HAP-1 (cell line): ENCODE measurements at regions of chr11 and their contacts with region 1.

Region 1: GRCh38 chr11:14249121-14249963 is 109.6 kb downstream of the RRAS2 start:
- DNase-seq: peak; percentile 68 to 75
- H3K4me3 ChIP-seq: no peak overlapping the region
- H3K4me1 ChIP-seq: no peaks in the 10 kb centered on the region
- H3K27me3 ChIP-seq: peaks cover 21% of the 10 kb centered on the region

Region 2: GRCh38 chr11:13210424-13210823 is 1038.9 kb before region 1 on chr11:
- in situ Hi-C with region 1: loop called (anchors 25 kb)
- DNase-seq: peak; percentile 39 to 73
- H3K4me3 ChIP-seq: no peak overlapping the region
- H3K4me1 ChIP-seq: peaks cover 7% of the 10 kb centered on the region; the same call in 1 of the 2 replicates
- H3K27me3 ChIP-seq: no peaks in the 10 kb centered on the region

Region 3: GRCh38 chr11:13767471-13767870 is 481.9 kb before region 1 on chr11:
- in situ Hi-C with region 1: loop called (anchors 5 kb)
- DNase-seq: no peak
- H3K4me3 ChIP-seq: no peak overlapping the region
- H3K4me1 ChIP-seq: no peaks in the 10 kb centered on the region; the same call in 1 of the 2 replicates
- H3K27me3 ChIP-seq: no peaks in the 10 kb centered on the region

Region 4: DNA sequence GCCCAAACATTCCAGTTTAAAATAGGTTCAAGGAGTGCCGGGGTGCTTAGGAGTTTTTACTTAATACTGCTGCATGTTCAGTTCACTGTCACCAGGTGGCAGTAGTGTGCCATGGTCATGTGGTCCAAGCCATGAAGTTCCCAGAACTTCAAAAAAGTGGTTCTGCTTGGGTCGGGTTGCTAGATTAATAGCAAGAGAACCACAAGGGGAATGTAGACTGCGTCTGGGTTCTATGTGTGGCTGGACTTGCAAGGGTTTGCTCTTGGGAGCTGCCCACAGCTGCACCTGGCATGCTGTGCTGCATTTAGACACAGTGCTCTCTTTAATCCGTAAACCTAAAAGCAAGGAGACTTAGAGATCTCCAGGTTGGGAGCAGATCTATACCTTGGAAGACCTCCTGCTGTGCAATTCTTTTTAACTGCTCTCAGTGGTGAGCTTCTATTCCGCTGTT is 293.3 kb before region 1 on chr11:
- in situ Hi-C with region 1: loop called (anchors 5 kb)
- DNase-seq: peak; percentile 31 to 61
- H3K4me3 ChIP-seq: no peak overlapping the region
- H3K4me1 ChIP-seq: no peaks in the 10 kb centered on the region
- H3K27me3 ChIP-seq: peaks cover 52% of the 10 kb centered on the region